ENCODE measurements at regions of chr3 and their contacts with region 1.

Region 1: DNA sequence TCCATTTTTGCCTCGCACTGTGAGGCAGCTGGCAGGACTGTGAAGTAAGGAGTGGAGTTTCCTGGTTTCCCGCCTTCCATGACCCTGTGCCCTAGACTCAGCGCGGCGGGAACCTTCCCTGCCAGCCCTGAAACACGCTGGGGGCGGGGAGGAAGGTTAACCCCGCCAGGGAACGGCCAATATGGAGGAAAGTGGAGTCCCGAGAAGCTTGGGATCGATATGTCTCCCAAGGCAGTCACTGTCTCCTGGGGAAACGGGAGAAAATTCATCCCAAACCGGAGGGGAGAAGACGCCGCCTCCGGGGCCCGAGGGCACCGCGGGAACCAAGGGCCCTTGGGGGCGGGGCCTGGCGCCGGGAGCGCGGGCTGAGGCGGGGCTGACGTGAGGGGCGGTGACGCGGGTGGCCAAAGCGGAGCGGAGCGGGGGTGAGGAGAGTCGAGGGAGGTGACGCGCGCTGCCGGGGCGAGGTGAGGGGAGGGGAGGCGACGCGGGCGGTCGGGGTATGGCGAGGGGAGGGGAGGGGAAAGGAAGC is at the start of gene HMCES:
- DNase-seq: peak; percentile 95
- H3K4me3 ChIP-seq: peak within 1 kb of the TSS; percentile 93
- H3K27ac ChIP-seq: peak within 1 kb of the TSS; percentile 94
- H3K4me1 ChIP-seq: peaks cover 77% of the 10 kb centered on the region
- CTCF ChIP-seq: no peak
- total RNA-seq, gene HMCES: 90.6 and 104 TPM in 2 replicates

Region 2: GRCh38 chr3:129316131-129317013 is 37.9 kb after region 1 on chr3:
- CTCF ChIA-PET with region 1: interaction called, 4 read pairs
- POLR2A ChIA-PET with region 1: interaction called, 20 read pairs
- intact Hi-C with region 1: loop called (anchors 1 kb)
- DNase-seq: peak; percentile 86
- H3K4me3 ChIP-seq: peak overlapping the region; percentile 89
- H3K27ac ChIP-seq: peak overlapping the region; percentile 73
- H3K4me1 ChIP-seq: peaks cover 40% of the 10 kb centered on the region
- CTCF ChIP-seq: peak; percentile 91

Region 3: DNA sequence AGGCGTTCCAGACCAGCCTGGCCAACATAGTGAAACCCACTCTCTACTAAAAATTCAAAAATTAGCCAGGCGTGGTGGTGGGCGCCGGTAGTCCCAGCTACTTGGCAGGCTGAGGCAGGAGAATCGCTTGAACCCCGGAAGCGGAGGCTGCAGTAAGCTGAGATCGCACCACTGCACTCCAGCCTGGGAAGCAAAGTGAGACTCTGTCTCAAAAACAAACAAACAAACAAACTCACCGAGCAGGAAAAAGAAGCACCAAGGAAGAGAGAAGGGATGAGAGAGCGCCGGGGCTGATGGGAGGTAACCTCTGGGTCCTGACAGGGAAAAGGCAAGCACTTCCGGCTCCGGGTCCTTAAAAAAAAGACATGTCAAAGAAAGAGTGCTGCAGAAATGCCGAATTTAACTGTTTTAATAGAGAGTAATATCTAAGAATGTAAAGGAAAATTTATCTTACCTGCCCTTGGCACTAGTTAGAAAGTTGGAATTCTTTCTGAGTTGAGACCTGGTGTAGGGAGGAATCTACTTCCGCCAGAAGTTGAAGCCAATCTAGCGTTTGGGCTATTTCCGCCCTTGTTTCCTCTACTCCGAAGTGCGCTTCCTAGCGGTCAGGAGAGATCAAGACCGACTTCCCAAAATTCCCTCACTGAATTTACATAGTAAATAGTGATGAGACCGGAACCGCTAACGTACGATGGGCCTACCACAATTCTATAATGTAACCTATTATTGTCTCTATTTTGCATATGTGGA is 120.8 kb after region 1 on chr3:
- CTCF ChIA-PET with region 1: interaction called, 3 read pairs
- POLR2A ChIA-PET with region 1: no interaction called
- intact Hi-C with region 1: loop called (anchors 5 kb)
- DNase-seq: peak; percentile 96
- H3K4me3 ChIP-seq: peak overlapping the region; percentile 87
- H3K27ac ChIP-seq: peak overlapping the region; percentile 59
- H3K4me1 ChIP-seq: peaks cover 22% of the 10 kb centered on the region
- CTCF ChIP-seq: peak; percentile 89